Activated T-helper 1 cell treated with anti-CD3 and anti-CD28 coated beads, Interleukin-12 subunit alpha, Interleukin-12 subunit beta, Interleukin-2, Interleukin-4 antibody, amounts not matched to agents 30 ng/mL and 10 ng/mL and 1 ng/mL, durations not matched to agents 14 hours and 24 hours and 36 hours (primary cell): ENCODE measurements at regions of chr17 and their contacts with region 1.

Region 1: DNA sequence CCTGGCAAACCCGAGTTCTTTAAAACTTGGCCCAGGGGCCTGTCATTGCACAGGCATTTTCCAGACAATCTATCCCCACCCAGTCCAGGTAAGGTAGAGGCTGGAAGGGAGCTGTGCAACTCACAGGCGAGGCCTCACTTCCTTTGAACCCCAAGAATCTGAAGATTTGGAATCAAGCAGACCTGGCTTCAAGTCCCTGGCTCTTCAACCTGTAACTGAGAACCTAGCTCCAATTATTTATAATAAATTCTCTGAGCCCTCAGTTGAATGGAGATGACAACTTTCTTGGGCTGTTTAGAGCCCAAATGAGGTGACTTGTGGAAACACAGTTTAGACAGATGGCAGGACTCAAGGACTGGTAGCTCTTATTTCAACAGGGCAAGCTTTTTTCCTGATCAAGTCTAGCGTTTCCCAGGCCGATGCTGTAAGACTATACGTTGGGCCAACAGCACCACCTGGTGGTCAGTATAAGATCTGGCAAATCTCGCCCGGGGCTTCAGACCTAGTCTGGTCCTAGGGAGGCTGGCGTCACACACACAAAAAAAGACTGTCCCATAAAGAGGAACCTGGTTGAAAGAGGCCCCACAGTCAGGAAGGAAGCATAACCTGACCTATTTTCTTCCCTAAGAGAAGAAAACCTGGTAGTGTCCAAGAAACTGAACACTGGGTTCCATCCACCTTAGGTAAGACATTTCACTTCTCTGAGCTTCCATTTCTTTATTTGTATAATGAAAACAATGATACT is 117.9 kb downstream of the C17orf67 start:
- DNase-seq: peak; percentile 59
- H3K4me3 Mint-ChIP-seq: no peak overlapping the region
- H3K27ac Mint-ChIP-seq: no peak overlapping the region
- H3K4me1 Mint-ChIP-seq: no peaks in the 10 kb centered on the region
- H3K27me3 Mint-ChIP-seq: peaks cover 7% of the 10 kb centered on the region

Region 2: GRCh38 chr17:56499799-56500388 is 215.9 kb before region 1 on chr17:
- intact Hi-C with region 1: loop called (anchors 1 kb)
- DNase-seq: no peak
- H3K4me3 Mint-ChIP-seq: no peak overlapping the region
- H3K27ac Mint-ChIP-seq: no peak overlapping the region
- H3K4me1 Mint-ChIP-seq: no peaks in the 10 kb centered on the region
- H3K27me3 Mint-ChIP-seq: no peaks in the 10 kb centered on the region

Region 3: DNA sequence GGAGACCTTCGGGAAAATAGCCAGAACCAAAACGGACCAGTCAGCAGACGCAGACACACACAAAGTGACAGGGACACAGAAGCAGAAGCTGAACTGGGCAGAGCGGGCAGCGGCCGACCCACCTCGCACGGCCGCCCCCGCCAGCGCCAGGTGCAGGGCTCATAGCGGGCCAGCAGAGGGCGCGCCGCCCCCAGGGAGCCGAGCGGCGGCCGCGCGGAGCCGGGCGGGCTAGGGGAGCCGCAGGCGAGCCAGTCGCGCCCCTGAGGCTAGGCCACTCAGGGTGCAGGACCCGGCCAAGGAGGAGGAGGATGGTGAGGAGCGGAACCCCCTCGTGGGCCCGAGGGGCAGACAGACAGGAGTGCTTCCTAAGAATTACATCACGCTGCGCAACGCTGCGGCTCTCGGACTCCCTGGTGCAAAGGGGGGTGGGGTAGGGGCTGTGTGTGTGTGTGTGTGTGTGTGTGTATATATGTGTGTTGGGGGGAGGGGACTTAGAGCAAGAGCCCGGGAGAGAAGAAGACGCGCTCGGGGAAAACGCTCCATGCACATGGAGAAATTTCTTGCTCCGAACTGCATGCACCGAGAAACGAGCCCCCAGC is 123.2 kb before region 1 on chr17:
- intact Hi-C with region 1: loop called (anchors 1 kb)
- DNase-seq: peak; percentile 39
- H3K4me3 Mint-ChIP-seq: peak overlapping the region; percentile 66
- H3K27ac Mint-ChIP-seq: no peak overlapping the region
- H3K4me1 Mint-ChIP-seq: peaks cover 17% of the 10 kb centered on the region
- H3K27me3 Mint-ChIP-seq: peaks cover 56% of the 10 kb centered on the region

Region 4: GRCh38 chr17:56640116-56640515 is 75.7 kb before region 1 on chr17:
- intact Hi-C with region 1: no loop called
- DNase-seq: no peak
- H3K4me3 Mint-ChIP-seq: no peak overlapping the region
- H3K27ac Mint-ChIP-seq: no peak overlapping the region
- H3K4me1 Mint-ChIP-seq: no peaks in the 10 kb centered on the region
- H3K27me3 Mint-ChIP-seq: peaks cover 9% of the 10 kb centered on the region

Region 5: GRCh38 chr17:56679115-56679766 is 36.5 kb before region 1 on chr17:
- intact Hi-C with region 1: loop called (anchors 1 kb)
- DNase-seq: no peak
- H3K4me3 Mint-ChIP-seq: no peak overlapping the region
- H3K27ac Mint-ChIP-seq: no peak overlapping the region
- H3K4me1 Mint-ChIP-seq: peaks cover 21% of the 10 kb centered on the region
- H3K27me3 Mint-ChIP-seq: peaks cover 42% of the 10 kb centered on the region